Vagina (tissue), 2 donors: ENCODE measurements at regions of chr6 and their contacts with region 1.

Region 1: GRCh38 chr6:13384966-13385365 is 56.6 kb upstream of the TBC1D7 start:
- DNase-seq: peak in 1 of 2 donors; percentile 75
- H3K4me3 ChIP-seq: no peak overlapping the region
- H3K27ac ChIP-seq: no peak overlapping the region
- H3K4me1 ChIP-seq: peaks cover 19% of the 10 kb centered on the region
- H3K27me3 ChIP-seq: no peaks in the 10 kb centered on the region
- CTCF ChIP-seq: no peak
- POLR2A ChIP-seq: no peak

Region 2: GRCh38 chr6:13368731-13369115 is 16.2 kb before region 1 on chr6:
- intact Hi-C with region 1: loop called (anchors 1 kb)
- DNase-seq: no peak
- H3K4me3 ChIP-seq: no peak overlapping the region
- H3K27ac ChIP-seq: no peak overlapping the region
- H3K4me1 ChIP-seq: peaks cover 45% of the 10 kb centered on the region
- H3K27me3 ChIP-seq: no peaks in the 10 kb centered on the region
- CTCF ChIP-seq: no peak
- POLR2A ChIP-seq: no peak